Natural killer cell (primary cell): ENCODE measurements at regions of chr11 and their contacts with region 1.

Region 1: GRCh38 chr11:269146-269890 is 8.9 kb upstream of the NLRP6 start:
- DNase-seq: peak; percentile 60 to 87
- ATAC-seq: peak; percentile 61 to 71 (median 63)
- H3K4me3 ChIP-seq: peak overlapping the region; percentile 63
- H3K4me3 Mint-ChIP-seq: peak overlapping the region; percentile 83
- H3K27ac ChIP-seq: peak overlapping the region; percentile 88
- H3K27ac Mint-ChIP-seq: peak overlapping the region; percentile 89 to 96
- H3K4me1 ChIP-seq: peaks cover 39% of the 10 kb centered on the region
- H3K4me1 Mint-ChIP-seq: peaks cover 20 to 40% of the 10 kb centered on the region in 2 donors
- H3K27me3 ChIP-seq: no peaks in the 10 kb centered on the region
- H3K27me3 Mint-ChIP-seq: peaks cover 0 to 2% of the 10 kb centered on the region in 2 donors
- CTCF ChIP-seq: peak; percentile 41

Region 2: GRCh38 chr11:207208-207862 is 62.0 kb before region 1 on chr11 and contains the starts of genes BET1L and RIC8A:
- intact Hi-C with region 1: loop called (anchors 1 kb)
- DNase-seq: peak; percentile 96 to 99
- ATAC-seq: peak; percentile 79 to 95 (median 83)
- H3K4me3 ChIP-seq: peak within 1 kb of the TSS; percentile 76
- H3K4me3 Mint-ChIP-seq: peak within 1 kb of the TSS; percentile 97
- H3K27ac ChIP-seq: peak within 1 kb of the TSS; percentile 94
- H3K27ac Mint-ChIP-seq: peak within 1 kb of the TSS; percentile 99
- H3K4me1 ChIP-seq: peaks cover 50% of the 10 kb centered on the region
- H3K4me1 Mint-ChIP-seq: peaks cover 40 to 55% of the 10 kb centered on the region in 2 donors
- H3K27me3 ChIP-seq: no peaks in the 10 kb centered on the region
- H3K27me3 Mint-ChIP-seq: no peaks in the 10 kb centered on the region
- CTCF ChIP-seq: no peak
- total RNA-seq, gene BET1L: 32.4 to 44.1 (median 35.8) TPM
- total RNA-seq, gene RIC8A: 102 to 153 (median 106) TPM

Region 3: DNA sequence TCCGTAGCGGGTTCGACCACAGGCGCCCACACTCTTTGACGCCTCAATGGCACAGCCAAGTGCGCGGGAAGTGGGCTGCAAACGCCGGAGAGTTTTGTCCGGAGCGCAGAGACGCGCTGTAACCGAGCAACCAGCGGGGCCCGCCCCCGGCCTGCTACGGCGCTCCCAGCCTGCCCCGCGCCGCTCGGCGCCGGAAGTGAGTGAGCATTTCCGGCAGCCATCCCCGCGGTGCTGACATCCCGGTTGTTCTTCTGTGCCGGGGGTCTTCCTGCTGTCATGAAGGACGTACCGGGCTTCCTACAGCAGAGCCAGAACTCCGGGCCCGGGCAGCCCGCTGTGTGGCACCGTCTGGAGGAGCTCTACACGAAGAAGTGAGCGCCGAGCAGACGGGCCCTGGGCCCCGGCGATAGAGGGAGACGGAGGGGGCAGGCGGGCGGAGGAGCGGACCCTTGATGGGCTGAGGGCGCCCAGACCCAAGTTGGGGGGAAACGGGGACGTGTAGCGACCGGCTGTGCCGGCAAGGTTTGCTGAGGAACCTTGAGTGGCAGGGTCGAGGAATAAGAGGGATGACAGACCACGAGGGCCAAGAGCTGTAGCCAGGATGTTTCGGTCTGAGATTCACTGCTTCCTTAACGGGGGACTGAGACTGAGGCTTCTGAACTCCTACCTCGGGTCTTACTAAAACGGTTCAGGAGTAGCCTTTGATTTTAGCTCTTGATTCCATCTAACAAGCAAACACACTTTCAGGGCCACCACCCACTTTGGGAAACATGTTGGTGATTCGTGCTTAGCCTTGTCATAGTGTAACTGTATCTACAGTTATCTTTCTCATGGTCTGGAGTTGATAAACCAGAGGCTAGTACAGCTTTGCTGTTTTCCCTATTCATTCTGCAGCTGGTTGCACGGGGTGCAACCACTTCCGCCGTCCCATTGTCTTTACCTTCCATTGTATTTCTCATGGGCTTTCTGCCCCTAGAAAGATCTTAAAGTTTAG is 32.2 kb before region 1 on chr11 and contains the start of gene PSMD13:
- intact Hi-C with region 1: loop called (anchors 1 kb)
- DNase-seq: peak; percentile 87 to 94
- ATAC-seq: peak; percentile 76 to 90 (median 79)
- H3K4me3 ChIP-seq: peak within 1 kb of the TSS; percentile 99
- H3K4me3 Mint-ChIP-seq: peak within 1 kb of the TSS; percentile 97
- H3K27ac ChIP-seq: peak within 1 kb of the TSS; percentile 100
- H3K27ac Mint-ChIP-seq: peak within 1 kb of the TSS; percentile 98
- H3K4me1 ChIP-seq: peaks cover 20% of the 10 kb centered on the region
- H3K4me1 Mint-ChIP-seq: peaks cover 38 to 42% of the 10 kb centered on the region in 2 donors
- H3K27me3 ChIP-seq: no peaks in the 10 kb centered on the region
- H3K27me3 Mint-ChIP-seq: no peaks in the 10 kb centered on the region
- CTCF ChIP-seq: no peak
- total RNA-seq, gene PSMD13: 94.6 to 111 (median 104) TPM

Region 4: GRCh38 chr11:313787-314547 is 44.6 kb after region 1 on chr11 and contains the start of gene IFITM1:
- intact Hi-C with region 1: loop called (anchors 2 kb)
- DNase-seq: peak in 1 of 2 donors; percentile 80
- ATAC-seq: peak; percentile 24 to 59 (median 47)
- H3K4me3 ChIP-seq: peak within 1 kb of the TSS; percentile 75
- H3K4me3 Mint-ChIP-seq: peak within 1 kb of the TSS; percentile 97
- H3K27ac ChIP-seq: peak within 1 kb of the TSS; percentile 72
- H3K27ac Mint-ChIP-seq: peak within 1 kb of the TSS; percentile 92 to 99
- H3K4me1 ChIP-seq: peaks cover 45% of the 10 kb centered on the region
- H3K4me1 Mint-ChIP-seq: peaks cover 55 to 57% of the 10 kb centered on the region in 2 donors
- H3K27me3 ChIP-seq: no peaks in the 10 kb centered on the region
- H3K27me3 Mint-ChIP-seq: no peaks in the 10 kb centered on the region
- CTCF ChIP-seq: no peak
- total RNA-seq, gene IFITM1: 540 to 809 (median 710) TPM

Region 5: DNA sequence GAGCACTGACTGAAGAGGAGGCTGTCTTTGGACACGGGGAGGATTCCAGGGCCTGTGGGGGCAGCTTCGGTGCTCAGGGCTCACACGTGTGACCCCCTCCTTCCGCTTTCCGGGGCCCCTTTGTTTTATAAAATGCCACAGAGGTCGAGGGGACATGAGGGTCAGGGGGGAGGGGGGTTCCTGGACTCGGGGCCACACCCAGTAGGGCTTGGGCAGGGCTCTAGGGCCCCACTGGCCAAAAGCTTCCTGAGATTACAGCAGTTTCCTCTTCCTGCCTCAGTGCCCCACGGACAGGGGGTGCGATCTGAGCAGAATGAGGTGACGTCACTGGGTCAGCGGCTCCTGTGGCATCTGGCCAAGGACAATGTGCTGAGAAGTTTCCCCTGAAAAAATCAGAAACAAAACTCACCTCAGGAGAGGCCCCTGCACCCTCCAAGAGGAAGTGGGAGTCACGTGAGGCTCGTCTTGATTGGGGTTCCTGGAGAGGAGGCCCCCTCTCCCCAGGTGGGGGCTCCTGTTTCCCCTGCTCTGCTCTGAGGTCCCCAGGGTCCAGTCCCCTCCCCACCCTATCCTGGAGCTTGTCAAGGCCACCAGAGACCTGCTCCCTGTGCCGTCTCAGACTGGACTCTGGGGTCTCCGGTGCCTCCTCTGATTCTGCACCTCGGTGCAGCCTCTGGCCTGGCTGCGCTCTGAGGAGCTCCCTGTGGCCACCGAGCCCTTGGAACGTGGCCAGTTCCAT is 57.7 kb after region 1 on chr11:
- intact Hi-C with region 1: no loop called
- DNase-seq: peak in 1 of 2 donors; percentile 89
- ATAC-seq: peak; percentile 51 to 75 (median 56)
- H3K4me3 ChIP-seq: peak overlapping the region; percentile 6
- H3K4me3 Mint-ChIP-seq: peak overlapping the region; percentile 67
- H3K27ac ChIP-seq: peak overlapping the region; percentile 89
- H3K27ac Mint-ChIP-seq: peak overlapping the region; percentile 78 to 94
- H3K4me1 ChIP-seq: peaks cover 73% of the 10 kb centered on the region
- H3K4me1 Mint-ChIP-seq: peaks cover 57 to 69% of the 10 kb centered on the region in 2 donors
- H3K27me3 ChIP-seq: no peaks in the 10 kb centered on the region
- H3K27me3 Mint-ChIP-seq: no peaks in the 10 kb centered on the region
- CTCF ChIP-seq: no peak

Region 6: GRCh38 chr11:355581-356458 is 86.5 kb after region 1 on chr11:
- intact Hi-C with region 1: loop called (anchors 1 kb)
- DNase-seq: peak; percentile 64 to 93
- ATAC-seq: peak; percentile 19 to 61 (median 58)
- H3K4me3 ChIP-seq: peak overlapping the region; percentile 11
- H3K4me3 Mint-ChIP-seq: peak overlapping the region; percentile 57
- H3K27ac ChIP-seq: peak overlapping the region; percentile 83
- H3K27ac Mint-ChIP-seq: peak overlapping the region; percentile 78
- H3K4me1 ChIP-seq: peaks cover 74% of the 10 kb centered on the region
- H3K4me1 Mint-ChIP-seq: peaks cover 41 to 57% of the 10 kb centered on the region in 2 donors
- H3K27me3 ChIP-seq: no peaks in the 10 kb centered on the region
- H3K27me3 Mint-ChIP-seq: no peaks in the 10 kb centered on the region
- CTCF ChIP-seq: no peak

Region 7: GRCh38 chr11:416757-417621 is 147.7 kb after region 1 on chr11:
- intact Hi-C with region 1: loop called (anchors 5 kb)
- DNase-seq: peak; percentile 57 to 65
- ATAC-seq: peak; percentile 47 to 66 (median 56)
- H3K4me3 ChIP-seq: peak overlapping the region; percentile 70
- H3K4me3 Mint-ChIP-seq: peak overlapping the region; percentile 96
- H3K27ac ChIP-seq: peak overlapping the region; percentile 81
- H3K27ac Mint-ChIP-seq: peak overlapping the region in 1 of 2 donors; percentile 84
- H3K4me1 ChIP-seq: peaks cover 44% of the 10 kb centered on the region
- H3K4me1 Mint-ChIP-seq: peaks cover 17 to 49% of the 10 kb centered on the region in 2 donors
- H3K27me3 ChIP-seq: no peaks in the 10 kb centered on the region
- H3K27me3 Mint-ChIP-seq: no peaks in the 10 kb centered on the region
- CTCF ChIP-seq: no peak

Region 8: DNA sequence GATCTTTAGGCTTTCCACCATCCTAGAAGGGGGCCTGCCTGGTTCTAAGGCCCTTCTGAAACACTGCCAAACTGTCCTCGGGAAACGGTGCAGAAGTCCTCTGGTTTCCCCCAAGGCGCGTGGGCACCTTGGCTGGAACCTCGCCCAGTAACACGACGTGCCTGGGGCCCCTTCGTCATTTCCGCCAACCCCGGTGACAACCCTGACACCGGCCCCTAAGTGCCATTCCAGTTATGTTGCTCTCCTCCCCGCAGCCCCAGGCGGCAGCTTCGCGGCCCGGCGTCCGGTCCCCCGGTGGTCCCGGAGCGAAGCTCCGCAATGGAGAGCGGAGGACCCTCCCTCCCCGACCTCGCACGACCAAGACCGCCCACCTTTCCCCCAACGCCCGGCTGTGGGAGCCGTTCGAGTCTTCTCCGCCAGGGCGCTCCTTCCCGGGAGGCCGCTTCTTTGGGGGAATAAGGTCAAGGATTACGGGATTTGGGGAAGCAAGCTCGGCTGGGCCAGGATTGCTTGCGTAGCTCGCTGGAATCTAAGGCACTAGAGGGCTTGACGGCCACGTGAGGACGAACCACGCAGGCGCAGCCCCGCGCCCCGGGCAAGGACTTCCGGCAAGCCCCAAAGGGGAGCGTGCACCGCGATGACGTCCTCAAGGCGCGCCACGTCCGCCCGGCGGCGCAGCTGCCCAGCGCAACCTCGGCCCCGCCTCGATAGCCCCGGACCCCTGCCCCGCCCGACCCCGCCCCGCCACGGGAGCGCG is 237.1 kb after region 1 on chr11:
- intact Hi-C with region 1: loop called (anchors 2 kb)
- DNase-seq: peak; percentile 97 to 99
- ATAC-seq: peak; percentile 71 to 87 (median 75)
- H3K4me3 ChIP-seq: peak overlapping the region; percentile 98
- H3K4me3 Mint-ChIP-seq: peak overlapping the region; percentile 97
- H3K27ac ChIP-seq: peak overlapping the region; percentile 100
- H3K27ac Mint-ChIP-seq: peak overlapping the region; percentile 97 to 99
- H3K4me1 ChIP-seq: peaks cover 52% of the 10 kb centered on the region
- H3K4me1 Mint-ChIP-seq: peaks cover 8 to 18% of the 10 kb centered on the region in 2 donors
- H3K27me3 ChIP-seq: no peaks in the 10 kb centered on the region
- H3K27me3 Mint-ChIP-seq: no peaks in the 10 kb centered on the region
- CTCF ChIP-seq: no peak